PC-9 (cell line): ENCODE measurements at regions of chr1 and their contacts with region 1.

Region 1: DNA sequence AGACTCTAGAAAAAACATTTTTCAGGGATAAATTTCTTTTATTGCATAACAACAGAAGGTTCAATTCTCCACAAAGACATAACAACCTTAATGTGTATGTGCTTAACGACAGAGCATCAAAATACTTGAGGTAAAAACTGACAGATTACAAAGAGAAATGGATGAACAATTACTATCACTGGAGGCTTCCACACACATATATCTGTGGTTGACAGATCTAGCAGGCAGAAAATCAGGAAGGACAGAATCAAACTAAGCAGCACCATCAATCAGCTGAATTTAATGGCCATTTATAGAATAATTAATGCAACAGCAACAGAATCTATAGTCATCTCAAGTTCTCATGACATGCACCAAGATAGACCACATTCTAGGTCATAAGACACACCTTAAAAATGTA is 306.0 kb upstream of the GREM2 start:
- DNase-seq: no peak
- H3K4me3 ChIP-seq: no peak overlapping the region
- H3K27ac ChIP-seq: no peak overlapping the region
- H3K4me1 ChIP-seq: no peaks in the 10 kb centered on the region
- H3K27me3 ChIP-seq: no peaks in the 10 kb centered on the region
- CTCF ChIP-seq: no peak

Region 2: DNA sequence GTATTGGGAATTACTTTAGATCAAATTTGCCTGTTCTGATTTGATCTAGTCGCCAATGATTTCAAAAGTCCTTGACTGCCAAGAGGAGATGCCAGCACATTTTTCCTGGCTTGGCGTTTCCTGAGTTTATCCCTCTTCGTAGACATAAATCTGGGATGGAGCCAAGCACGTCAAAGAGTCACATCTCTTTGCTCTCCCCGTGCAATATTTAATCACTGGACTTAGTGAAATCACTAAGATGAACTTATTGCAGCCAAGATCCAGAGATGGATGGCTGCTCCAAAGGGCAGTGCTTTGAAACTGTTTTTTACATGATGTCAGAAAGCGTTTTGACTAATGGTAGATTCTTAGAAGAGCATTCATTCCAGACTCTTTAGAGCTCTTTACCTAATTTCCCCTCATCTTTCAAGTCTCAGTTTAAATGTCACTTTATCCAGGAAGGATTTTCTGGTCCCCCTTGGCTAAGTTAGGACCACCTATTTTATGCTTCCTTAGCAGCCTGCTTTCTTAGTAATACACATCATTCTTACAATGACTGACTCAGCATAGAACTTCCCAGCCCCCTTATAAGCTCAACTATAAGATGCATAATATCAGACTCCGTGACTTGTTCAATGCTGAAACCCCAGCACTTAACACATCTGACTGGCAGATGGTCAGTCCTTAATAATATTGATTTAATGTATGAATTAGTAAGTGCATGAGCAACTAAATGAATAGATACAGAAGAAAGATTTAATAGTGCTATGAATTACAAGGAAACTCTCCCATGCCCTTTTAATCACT is 211.6 kb before region 1 on chr1:
- CTCF ChIA-PET with region 1: no interaction called
- POLR2A ChIA-PET with region 1: no interaction called
- intact Hi-C with region 1: no loop called
- DNase-seq: no peak
- H3K4me3 ChIP-seq: no peak overlapping the region
- H3K27ac ChIP-seq: no peak overlapping the region
- H3K4me1 ChIP-seq: no peaks in the 10 kb centered on the region
- H3K27me3 ChIP-seq: peaks cover 84% of the 10 kb centered on the region
- CTCF ChIP-seq: no peak

Region 3: DNA sequence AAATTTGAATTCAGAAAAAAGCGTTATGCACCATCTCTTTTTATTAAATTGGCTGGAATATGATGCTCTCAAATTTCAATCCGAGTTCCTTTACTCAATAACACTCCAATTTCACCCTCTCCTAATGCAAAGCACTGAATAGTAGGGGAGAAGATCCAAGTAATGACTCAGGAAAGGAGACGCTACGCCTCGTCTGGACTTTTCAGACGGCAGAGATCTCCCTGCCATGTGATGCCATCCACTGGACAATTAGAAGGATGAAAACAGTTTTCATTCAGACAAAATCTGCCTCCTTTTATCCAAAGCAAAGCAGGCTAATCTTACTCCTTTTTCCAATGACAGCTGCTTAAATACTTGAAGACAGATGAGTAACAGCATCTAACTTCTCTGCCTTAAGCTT is 63.6 kb before region 1 on chr1:
- CTCF ChIA-PET with region 1: no interaction called
- POLR2A ChIA-PET with region 1: no interaction called
- intact Hi-C with region 1: loop called (anchors 5 kb)
- DNase-seq: no peak
- H3K4me3 ChIP-seq: no peak overlapping the region
- H3K27ac ChIP-seq: no peak overlapping the region
- H3K4me1 ChIP-seq: no peaks in the 10 kb centered on the region
- H3K27me3 ChIP-seq: peaks cover 11% of the 10 kb centered on the region; the same call in 1 of the 2 replicates
- CTCF ChIP-seq: no peak